CD14-positive monocyte (primary cell): ENCODE measurements at regions of chr1 and their contacts with region 1.

Region 1: DNA sequence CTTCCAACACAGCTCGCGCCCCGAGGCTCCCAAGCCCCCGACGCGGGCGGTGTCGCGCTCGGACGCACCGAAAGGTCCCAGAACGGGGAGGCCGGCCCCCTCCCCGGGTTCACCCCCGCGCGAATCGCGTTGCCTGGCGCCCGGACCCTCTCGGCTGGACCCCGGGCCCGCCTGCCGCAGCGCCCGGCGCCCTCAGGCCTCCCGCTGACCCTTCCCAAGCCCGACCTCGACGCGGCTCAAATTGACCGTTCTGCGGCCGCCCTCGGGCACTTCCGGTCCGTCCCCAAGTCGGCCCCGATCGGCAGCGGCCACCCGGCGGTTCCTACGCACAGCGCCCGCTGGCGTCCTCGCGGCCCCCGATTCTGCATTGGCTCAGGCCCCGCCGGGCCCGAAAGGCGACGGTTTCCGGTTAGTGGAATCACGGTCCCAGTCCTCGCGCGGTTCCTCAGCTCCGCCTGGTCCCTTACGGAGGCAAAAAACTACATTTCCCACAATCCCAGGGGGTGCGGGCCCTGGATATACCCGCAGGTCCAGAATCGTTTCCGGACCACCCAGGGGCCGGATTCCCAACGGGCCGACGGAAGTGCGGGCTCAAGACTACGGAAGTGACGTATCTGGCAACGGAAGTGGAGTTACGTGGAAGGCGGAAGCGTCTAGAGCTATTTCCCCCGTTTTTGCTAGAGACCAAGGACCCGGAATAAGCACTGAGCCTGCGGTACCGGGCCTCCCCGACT is at the start of gene AURKAIP1:
- DNase-seq: peak; percentile 100
- H3K4me3 ChIP-seq: peak within 1 kb of the TSS; percentile 82 to 92 (median 83)
- H3K4me3 Mint-ChIP-seq: peak within 1 kb of the TSS; percentile 81 to 90
- H3K27ac ChIP-seq: peak within 1 kb of the TSS; percentile 88 to 94
- H3K27ac Mint-ChIP-seq: peak within 1 kb of the TSS; percentile 95 to 99 (median 97)
- H3K4me1 ChIP-seq: peaks cover 37 to 49% of the 10 kb centered on the region in 2 donors
- H3K4me1 Mint-ChIP-seq: peaks cover 39% of the 10 kb centered on the region
- H3K27me3 ChIP-seq: no peaks in the 10 kb centered on the region
- H3K27me3 Mint-ChIP-seq: peaks cover 3 to 4% (median 3%) of the 10 kb centered on the region in 3 donors
- CTCF ChIP-seq: peak; percentile 24
- polyA plus RNA-seq, gene AURKAIP1: 59.1 to 160 (median 134) TPM

Region 2: GRCh38 chr1:1019122-1019999 is 355.7 kb before region 1 on chr1:
- intact Hi-C with region 1: loop called in 1 of 2 experiments (anchors 10 kb)
- DNase-seq: peak; percentile 68 to 76 (median 72)
- H3K4me3 ChIP-seq: peak overlapping the region; percentile 30 to 61 (median 31)
- H3K4me3 Mint-ChIP-seq: peak overlapping the region; percentile 73 to 74
- H3K27ac ChIP-seq: no peak overlapping the region
- H3K27ac Mint-ChIP-seq: peak overlapping the region in 1 of 7 donors; percentile 19
- H3K4me1 ChIP-seq: peaks cover 14 to 31% of the 10 kb centered on the region in 2 donors
- H3K4me1 Mint-ChIP-seq: peaks cover 6% of the 10 kb centered on the region
- H3K27me3 ChIP-seq: peaks cover 7 to 36% of the 10 kb centered on the region in 2 donors
- H3K27me3 Mint-ChIP-seq: peaks cover 29 to 42% (median 40%) of the 10 kb centered on the region in 3 donors
- CTCF ChIP-seq: peak; percentile 36

Region 3: DNA sequence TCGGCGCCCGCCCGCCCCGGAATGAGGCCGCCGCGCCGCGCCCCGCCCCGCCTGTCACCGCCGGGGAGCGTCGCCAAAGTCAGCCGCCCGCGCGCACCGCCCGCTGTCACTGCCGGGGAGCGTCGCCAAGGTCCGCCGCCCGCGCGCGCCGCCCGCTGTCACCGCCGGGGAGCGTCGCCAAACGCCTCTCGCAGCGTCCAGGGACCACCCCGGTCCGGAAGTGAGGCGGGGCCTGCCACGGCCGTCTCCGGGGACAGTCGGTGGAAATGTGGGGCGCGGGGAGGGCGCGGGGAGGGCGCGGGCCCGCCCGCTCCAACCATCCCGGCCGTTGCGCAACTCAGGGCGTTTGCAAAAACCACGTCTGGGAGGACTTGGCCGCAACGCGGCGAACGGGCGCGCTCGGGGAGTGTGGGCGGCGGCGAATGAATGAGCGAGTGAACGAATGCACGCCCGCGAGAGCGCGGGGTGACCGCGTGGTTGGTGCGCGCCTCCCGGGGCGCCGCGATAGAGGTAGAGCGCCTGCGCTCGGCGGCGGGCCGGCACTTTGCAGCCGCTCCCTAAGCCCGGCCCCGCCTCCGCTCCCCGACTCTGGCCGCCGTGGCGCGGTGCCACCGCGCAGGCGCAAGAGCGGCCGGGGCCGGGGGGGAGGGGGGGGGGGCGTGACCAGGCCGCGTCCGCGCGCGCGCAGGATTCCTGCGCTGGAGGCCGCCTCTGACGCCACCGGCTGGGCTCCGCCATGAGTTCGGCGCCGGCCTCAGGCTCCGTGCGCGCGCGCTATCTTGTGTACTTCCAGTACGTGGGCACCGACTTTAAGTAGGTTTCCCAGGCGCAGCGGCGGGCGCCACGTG is 67.0 kb before region 1 on chr1 and contains the starts of genes ACAP3 and PUSL1:
- intact Hi-C with region 1: loop called in 1 of 2 experiments (anchors 5 kb)
- DNase-seq: peak; percentile 88 to 90 (median 89)
- H3K4me3 ChIP-seq: peak within 1 kb of the TSS; percentile 57 to 91 (median 88)
- H3K4me3 Mint-ChIP-seq: peak within 1 kb of the TSS; percentile 81 to 90
- H3K27ac ChIP-seq: peak within 1 kb of the TSS; percentile 75 to 86
- H3K27ac Mint-ChIP-seq: peak within 1 kb of the TSS; percentile 83 to 96 (median 90)
- H3K4me1 ChIP-seq: peaks cover 39 to 55% of the 10 kb centered on the region in 2 donors
- H3K4me1 Mint-ChIP-seq: peaks cover 36% of the 10 kb centered on the region
- H3K27me3 ChIP-seq: no peaks in the 10 kb centered on the region
- H3K27me3 Mint-ChIP-seq: peaks cover 0 to 4% (median 0%) of the 10 kb centered on the region in 3 donors
- CTCF ChIP-seq: no peak
- polyA plus RNA-seq, gene ACAP3: 3.5 to 132 (median 4.0) TPM
- polyA plus RNA-seq, gene PUSL1: 13.8 to 27.4 (median 14.8) TPM

Region 4: DNA sequence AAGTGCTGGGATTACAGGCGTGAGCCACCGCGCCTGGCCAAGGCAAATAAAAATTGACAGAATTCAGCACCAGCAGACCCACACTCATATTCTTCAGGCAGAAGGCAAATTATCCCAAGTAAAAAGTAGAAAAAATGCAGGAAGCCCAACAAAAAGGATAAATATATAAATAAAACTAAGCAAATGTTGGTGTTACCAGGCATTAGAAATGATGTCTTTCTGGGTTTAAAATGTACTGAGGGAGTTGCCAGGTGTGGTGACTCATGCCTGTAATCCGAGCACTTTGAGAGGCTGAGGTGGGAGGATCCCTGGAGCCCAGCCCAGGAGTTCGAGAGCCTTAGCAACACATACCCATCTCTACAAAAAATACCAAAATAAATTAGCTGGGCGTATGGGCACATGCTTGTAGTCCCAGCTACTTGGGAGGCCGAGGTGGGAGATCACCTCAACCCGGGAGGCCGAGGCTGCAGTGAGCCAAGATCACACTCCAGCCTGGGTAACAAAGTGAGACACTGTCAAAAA is 56.9 kb before region 1 on chr1:
- intact Hi-C with region 1: no loop called
- DNase-seq: no peak
- H3K4me3 ChIP-seq: no peak overlapping the region
- H3K4me3 Mint-ChIP-seq: no peak overlapping the region
- H3K27ac ChIP-seq: no peak overlapping the region
- H3K27ac Mint-ChIP-seq: peak overlapping the region in 3 of 7 donors; percentile 5 to 40 (median 37)
- H3K4me1 ChIP-seq: peaks cover 4% of the 10 kb centered on the region in 2 donors
- H3K4me1 Mint-ChIP-seq: peaks cover 9% of the 10 kb centered on the region
- H3K27me3 ChIP-seq: no peaks in the 10 kb centered on the region
- H3K27me3 Mint-ChIP-seq: no peaks in the 10 kb centered on the region
- CTCF ChIP-seq: no peak

Region 5: DNA sequence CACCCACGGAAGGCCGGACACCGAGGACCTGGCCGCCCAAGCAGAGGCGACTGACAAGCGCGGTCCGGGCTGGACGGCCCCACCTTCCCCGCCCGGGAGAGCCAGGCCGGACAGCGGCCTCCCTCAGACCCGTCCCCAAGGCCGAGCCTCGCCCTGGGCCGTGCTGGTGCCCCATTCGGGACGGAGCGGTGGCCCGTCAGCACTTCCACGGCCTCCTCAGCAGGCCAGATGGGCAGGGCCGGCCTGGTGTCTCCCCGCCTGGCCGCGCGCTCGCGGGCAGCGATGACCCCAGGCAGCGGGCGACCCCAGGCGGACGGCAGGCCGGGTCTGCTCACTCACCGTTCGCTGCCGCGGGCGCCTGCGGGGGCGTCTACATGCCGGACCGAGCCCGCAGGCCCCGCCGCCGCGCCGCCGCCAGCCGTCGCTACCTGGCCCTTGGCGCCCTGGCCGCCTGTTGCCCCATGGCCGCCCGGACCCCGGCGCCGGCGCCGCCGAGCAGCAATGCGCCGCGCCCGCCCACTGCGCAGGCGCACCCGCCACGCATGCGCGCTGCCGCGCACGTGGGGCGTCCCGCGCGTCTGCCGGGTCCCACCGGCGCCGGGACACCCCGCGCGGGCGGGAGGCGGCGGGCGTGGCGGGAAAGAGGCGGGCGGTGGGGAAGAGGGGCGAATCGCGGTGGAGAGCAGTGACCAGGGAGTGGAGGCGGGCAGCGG is 403.0 kb after region 1 on chr1 and contains the start of gene NADK:
- intact Hi-C with region 1: no loop called
- DNase-seq: peak; percentile 37 to 78 (median 63)
- H3K4me3 ChIP-seq: peak within 1 kb of the TSS; percentile 82 to 99 (median 94)
- H3K4me3 Mint-ChIP-seq: peak within 1 kb of the TSS; percentile 97 to 99
- H3K27ac ChIP-seq: peak within 1 kb of the TSS; percentile 90 to 96
- H3K27ac Mint-ChIP-seq: peak within 1 kb of the TSS; percentile 99 to 100 (median 100)
- H3K4me1 ChIP-seq: peaks cover 64 to 76% of the 10 kb centered on the region in 2 donors
- H3K4me1 Mint-ChIP-seq: peaks cover 64% of the 10 kb centered on the region
- H3K27me3 ChIP-seq: no peaks in the 10 kb centered on the region
- H3K27me3 Mint-ChIP-seq: peaks cover 0 to 7% (median 0%) of the 10 kb centered on the region in 3 donors
- CTCF ChIP-seq: no peak
- polyA plus RNA-seq, gene NADK: 175 to 425 (median 235) TPM